ENCODE measurements at regions of chr1 and their contacts with region 1.

Region 1: GRCh38 chr1:45490626-45491486 is at the start of gene TESK2:
- DNase-seq: peak; percentile 95 to 97
- ATAC-seq: peak; percentile 97 to 99 (median 98)
- H3K4me3 ChIP-seq: peak within 1 kb of the TSS; percentile 62 to 96 (median 86)
- H3K27ac ChIP-seq: peak within 1 kb of the TSS in 9 of 10 donors; percentile 35 to 83 (median 76)
- H3K4me1 ChIP-seq: peaks cover 0 to 29% (median 10%) of the 10 kb centered on the region in 9 donors
- H3K27me3 ChIP-seq: no peaks in the 10 kb centered on the region
- CTCF ChIP-seq: peak in 4 of 9 donors; percentile 8 to 29 (median 19)
- total RNA-seq, gene TESK2: 0.77 to 2.6 (median 1.3) TPM

Region 2: GRCh38 chr1:45018599-45019230 is 472.1 kb before region 1 on chr1:
- intact Hi-C with region 1: loop called (anchors 2 to 10 kb)
- DNase-seq: no peak
- ATAC-seq: peak in 7 of 8 donors; percentile 51 to 73 (median 63)
- H3K4me3 ChIP-seq: no peak overlapping the region
- H3K27ac ChIP-seq: no peak overlapping the region
- H3K4me1 ChIP-seq: peaks cover 0 to 13% (median 7%) of the 10 kb centered on the region in 9 donors
- H3K27me3 ChIP-seq: no peaks in the 10 kb centered on the region
- CTCF ChIP-seq: peak; percentile 17 to 77 (median 59)

Region 3: GRCh38 chr1:45359882-45360513 is 130.9 kb before region 1 on chr1:
- intact Hi-C with region 1: loop called (anchors 1 to 5 kb)
- DNase-seq: peak; percentile 33 to 80
- ATAC-seq: peak; percentile 72 to 92 (median 86)
- H3K4me3 ChIP-seq: peak overlapping the region in 3 of 10 donors; percentile 15 to 16 (median 16)
- H3K27ac ChIP-seq: peak overlapping the region in 9 of 10 donors; percentile 55 to 78 (median 73)
- H3K4me1 ChIP-seq: peaks cover 0 to 23% (median 11%) of the 10 kb centered on the region in 9 donors
- H3K27me3 ChIP-seq: no peaks in the 10 kb centered on the region
- CTCF ChIP-seq: peak; percentile 58 to 86 (median 78)